ENCODE measurements at regions of chr14 and their contacts with region 1.

Region 1: DNA sequence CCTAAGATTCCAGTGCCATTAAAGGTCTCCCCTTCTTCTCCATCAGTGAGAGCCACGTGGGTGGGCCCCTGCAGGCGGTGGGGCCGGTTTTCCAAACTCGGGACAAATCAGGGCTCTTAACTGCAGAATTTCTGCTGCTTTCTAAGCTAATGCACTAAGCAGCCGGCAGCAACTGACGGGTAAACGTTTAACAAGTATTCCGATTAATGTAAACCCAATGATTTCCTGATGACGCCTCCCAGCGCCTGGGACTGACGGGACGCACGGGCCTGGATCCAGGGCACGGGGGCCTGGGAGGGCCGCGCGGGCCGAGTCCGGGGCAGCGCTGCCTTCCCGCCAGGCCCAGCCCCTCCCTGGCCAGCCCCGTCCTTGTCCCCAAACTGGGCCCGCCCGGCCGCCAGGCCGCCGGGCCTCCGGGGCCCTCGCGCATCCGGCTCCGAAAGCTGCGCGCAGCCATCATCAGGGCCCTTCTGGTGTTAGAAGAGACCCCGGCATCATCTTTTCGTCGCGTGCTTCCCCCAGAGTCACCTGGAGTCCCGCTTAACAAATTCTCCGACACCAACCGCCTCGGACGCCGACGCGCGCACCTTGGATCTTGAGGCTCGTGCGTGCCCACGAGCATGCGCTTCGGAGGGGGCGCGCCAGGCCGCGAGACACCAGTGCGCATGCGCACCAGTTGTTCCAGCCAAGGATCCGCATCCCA is at the start of gene MLH3:
- DNase-seq: peak; percentile 64 to 92 (median 76)
- ATAC-seq: peak; percentile 80
- H3K4me3 ChIP-seq: peak within 1 kb of the TSS; percentile 70
- H3K4me3 Mint-ChIP-seq: peak within 1 kb of the TSS; percentile 96
- H3K27ac ChIP-seq: peak within 1 kb of the TSS in 1 of 2 donors; percentile 66
- H3K27ac Mint-ChIP-seq: peak within 1 kb of the TSS; percentile 84
- H3K4me1 ChIP-seq: peaks cover 15% of the 10 kb centered on the region
- H3K4me1 Mint-ChIP-seq: peaks cover 55% of the 10 kb centered on the region
- H3K27me3 ChIP-seq: no peaks in the 10 kb centered on the region
- H3K27me3 Mint-ChIP-seq: no peaks in the 10 kb centered on the region
- CTCF ChIP-seq: no peak
- total RNA-seq, gene MLH3: 13.2 to 14.4 TPM

Region 2: GRCh38 chr14:75063407-75064213 is 12.6 kb after region 1 on chr14 and contains the start of gene ACYP1:
- CTCF ChIA-PET with region 1: interaction called, 7 read pairs
- POLR2A ChIA-PET with region 1: interaction called, 22 read pairs
- intact Hi-C with region 1: loop called in 1 of 2 experiments (anchors 2 kb)
- DNase-seq: peak; percentile 81 to 93 (median 87)
- ATAC-seq: peak; percentile 99
- H3K4me3 ChIP-seq: peak within 1 kb of the TSS; percentile 88
- H3K4me3 Mint-ChIP-seq: peak within 1 kb of the TSS; percentile 98
- H3K27ac ChIP-seq: peak within 1 kb of the TSS; percentile 59 to 78
- H3K27ac Mint-ChIP-seq: peak within 1 kb of the TSS; percentile 93
- H3K4me1 ChIP-seq: peaks cover 22% of the 10 kb centered on the region
- H3K4me1 Mint-ChIP-seq: peaks cover 46% of the 10 kb centered on the region
- H3K27me3 ChIP-seq: no peaks in the 10 kb centered on the region
- H3K27me3 Mint-ChIP-seq: no peaks in the 10 kb centered on the region
- CTCF ChIP-seq: no peak
- total RNA-seq, gene ACYP1: 7.9 to 9.4 TPM

Region 3: GRCh38 chr14:75069045-75069810 is 18.2 kb after region 1 on chr14 and contains the start of gene ZC2HC1C:
- CTCF ChIA-PET with region 1: interaction called, 7 read pairs
- POLR2A ChIA-PET with region 1: interaction called, 22 read pairs
- intact Hi-C with region 1: loop called in 1 of 2 experiments (anchors 2 kb)
- DNase-seq: peak in 13 of 14 experiments; percentile 13 to 74 (median 34)
- ATAC-seq: peak; percentile 85
- H3K4me3 ChIP-seq: peak within 1 kb of the TSS; percentile 72
- H3K4me3 Mint-ChIP-seq: peak within 1 kb of the TSS; percentile 77
- H3K27ac ChIP-seq: no peak within 1 kb of the TSS
- H3K27ac Mint-ChIP-seq: peak within 1 kb of the TSS; percentile 44
- H3K4me1 ChIP-seq: peaks cover 21% of the 10 kb centered on the region
- H3K4me1 Mint-ChIP-seq: peaks cover 15% of the 10 kb centered on the region
- H3K27me3 ChIP-seq: no peaks in the 10 kb centered on the region
- H3K27me3 Mint-ChIP-seq: no peaks in the 10 kb centered on the region
- CTCF ChIP-seq: no peak
- total RNA-seq, gene ZC2HC1C: 0.22 to 0.30 TPM